Cardiac septum (tissue), 1 donor: ENCODE measurements at regions of chr16 and their contacts with region 1.

Region 1: GRCh38 chr16:85393674-85394483 is 219.2 kb upstream of the GSE1 start:
- DNase-seq: peak; percentile 83

Region 2: GRCh38 chr16:85114909-85115567 is 278.8 kb before region 1 on chr16:
- intact Hi-C with region 1: loop called (anchors 10 kb)
- DNase-seq: peak; percentile 95

Region 3: GRCh38 chr16:85321509-85322271 is 72.2 kb before region 1 on chr16:
- intact Hi-C with region 1: loop called (anchors 5 kb)
- DNase-seq: peak; percentile 94

Region 4: DNA sequence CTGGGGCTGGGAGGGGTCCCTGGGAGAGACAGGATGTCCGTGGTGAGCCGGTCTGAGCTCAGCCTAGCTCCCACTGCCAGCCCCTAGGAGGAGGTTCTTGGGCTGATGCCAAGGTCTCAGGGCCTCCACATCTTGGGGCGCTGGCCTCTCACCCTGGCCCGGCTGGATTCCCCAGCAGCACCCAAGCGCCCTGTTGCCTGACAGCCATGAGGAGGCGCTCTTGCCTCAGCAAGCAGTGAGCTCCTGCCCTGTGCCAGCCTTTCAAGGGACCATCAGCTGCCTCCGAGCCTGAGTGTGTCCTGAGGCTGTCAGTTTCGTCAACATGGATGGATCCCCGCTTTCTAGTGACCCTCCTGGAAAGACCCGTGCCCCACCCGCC is 46.7 kb before region 1 on chr16:
- intact Hi-C with region 1: no loop called
- DNase-seq: no peak

Region 5: DNA sequence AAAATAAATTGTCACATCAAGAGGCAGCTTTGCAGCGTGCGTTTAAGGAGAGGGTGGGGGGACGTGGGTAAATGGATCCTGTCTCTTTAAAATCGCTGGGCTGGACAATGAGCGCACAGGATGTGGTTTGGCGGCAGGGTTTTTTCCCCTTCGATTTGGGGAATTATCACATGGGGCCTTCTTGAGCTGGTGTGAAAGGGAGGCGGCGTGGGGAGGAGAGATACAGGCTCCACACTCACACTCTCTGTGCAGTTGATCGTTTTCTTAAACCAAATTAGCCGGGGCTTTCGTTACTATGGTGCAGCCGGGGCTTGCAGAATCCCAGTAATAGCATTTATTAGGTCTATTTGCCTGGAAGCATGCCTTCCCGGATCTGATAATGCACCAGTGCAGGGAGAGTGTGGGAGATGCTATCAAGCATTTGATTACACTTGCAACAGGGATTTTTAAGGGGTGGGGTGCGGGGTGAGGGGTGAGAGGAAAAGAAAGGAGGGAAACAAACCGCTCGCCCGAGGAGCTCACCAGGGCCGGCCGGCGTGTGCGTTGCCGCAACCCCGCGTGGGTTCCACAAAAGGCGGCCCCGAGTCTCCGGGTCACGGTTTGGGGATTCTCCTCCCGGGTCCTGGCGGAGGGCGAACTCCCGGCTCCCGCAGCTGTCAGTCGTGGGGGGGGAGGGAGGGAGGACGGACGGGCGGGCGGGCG is 160.4 kb after region 1 on chr16:
- intact Hi-C with region 1: loop called (anchors 10 kb)
- DNase-seq: peak; percentile 92